ENCODE measurements at regions of chr2 and their contacts with region 1.

Region 1: GRCh38 chr2:3628800-3629199 is 29.2 kb upstream of the ALLC start:
- DNase-seq: peak; percentile 21 to 78
- H3K4me3 ChIP-seq: no peak overlapping the region
- H3K27ac ChIP-seq: no peak overlapping the region
- H3K4me1 ChIP-seq: no peaks in the 10 kb centered on the region; a peak in 2 of 7 replicates
- H3K27me3 ChIP-seq: no peaks in the 10 kb centered on the region; a peak in 1 of 7 replicates
- CTCF ChIP-seq: peak in 2 of 3 experiments; percentile 57 to 78; a peak in 3 of 4 replicates
- EP300 ChIP-seq: no peak
- POLR2A ChIP-seq: no peak
- RAD21 ChIP-seq: peak; percentile 64 to 71

Region 2: DNA sequence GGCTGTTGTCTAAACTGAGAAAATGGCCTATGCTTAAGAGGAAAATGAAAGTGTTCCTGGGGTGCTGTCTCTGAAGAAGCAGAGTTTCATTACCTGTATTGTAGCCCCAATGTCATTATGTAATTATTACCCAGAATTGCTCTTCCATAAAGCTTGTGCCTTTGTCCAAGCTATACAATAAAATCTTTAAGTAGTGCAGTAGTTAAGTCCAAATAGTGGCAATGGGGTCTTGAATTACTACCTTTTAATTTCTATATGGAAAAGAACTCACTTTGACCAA is 15.4 kb after region 1 on chr2:
- CTCF ChIA-PET with region 1: interaction called, 22 read pairs
- POLR2A ChIA-PET with region 1: no interaction called
- DNase-seq: no peak
- H3K4me3 ChIP-seq: no peak overlapping the region
- H3K27ac ChIP-seq: no peak overlapping the region
- H3K4me1 ChIP-seq: no peaks in the 10 kb centered on the region; a peak in 1 of 7 replicates
- H3K27me3 ChIP-seq: no peaks in the 10 kb centered on the region
- CTCF ChIP-seq: no peak
- EP300 ChIP-seq: no peak
- POLR2A ChIP-seq: no peak
- RAD21 ChIP-seq: no peak

Region 3: GRCh38 chr2:3677436-3677835 is 48.6 kb after region 1 on chr2:
- CTCF ChIA-PET with region 1: no interaction called
- POLR2A ChIA-PET with region 1: no interaction called
- DNase-seq: no peak
- H3K4me3 ChIP-seq: no peak overlapping the region
- H3K27ac ChIP-seq: no peak overlapping the region
- H3K4me1 ChIP-seq: no peaks in the 10 kb centered on the region
- H3K27me3 ChIP-seq: no peaks in the 10 kb centered on the region; a peak in 1 of 7 replicates
- CTCF ChIP-seq: no peak
- EP300 ChIP-seq: no peak
- POLR2A ChIP-seq: no peak
- RAD21 ChIP-seq: no peak

Measured in H1 (cell line).